ENCODE measurements at regions of chr3 and their contacts with region 1.

Region 1: DNA sequence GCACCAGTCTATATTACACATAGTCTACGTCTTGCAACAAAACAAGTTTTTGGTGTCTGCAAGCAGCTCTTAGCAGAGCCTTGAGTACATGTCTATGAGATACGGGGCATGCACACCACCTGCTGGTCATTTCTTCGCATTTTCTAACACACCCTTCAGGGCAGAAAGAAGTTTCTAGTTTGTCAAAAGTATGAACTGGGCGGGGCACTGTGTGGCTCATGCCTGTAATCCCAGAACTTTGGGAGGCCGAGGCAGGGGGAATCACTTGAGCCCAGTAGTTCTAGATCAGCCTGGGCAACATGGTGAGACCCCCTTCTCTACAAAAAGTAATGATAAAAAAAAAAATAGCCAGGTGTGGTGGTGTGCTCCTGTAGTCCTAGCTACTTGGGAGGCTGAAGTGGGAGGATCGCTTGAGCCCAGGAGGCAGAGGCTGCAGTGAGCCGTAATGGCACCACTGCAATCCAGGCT is 64.2 kb upstream of the ARL8B start:
- DNase-seq: peak; percentile 91
- ATAC-seq: peak; percentile 94
- H3K4me3 Mint-ChIP-seq: no peak overlapping the region
- H3K27ac Mint-ChIP-seq: peak overlapping the region; percentile 20
- H3K4me1 Mint-ChIP-seq: peaks cover 73% of the 10 kb centered on the region
- H3K27me3 Mint-ChIP-seq: peaks cover 9% of the 10 kb centered on the region

Region 2: GRCh38 chr3:4720279-4721075 is 337.4 kb before region 1 on chr3:
- CTCF ChIA-PET with region 1: interaction called, 190 read pairs
- DNase-seq: no peak
- ATAC-seq: peak; percentile 54
- H3K4me3 Mint-ChIP-seq: no peak overlapping the region
- H3K27ac Mint-ChIP-seq: peak overlapping the region; percentile 12
- H3K4me1 Mint-ChIP-seq: peaks cover 53% of the 10 kb centered on the region
- H3K27me3 Mint-ChIP-seq: no peaks in the 10 kb centered on the region

Region 3: GRCh38 chr3:5026331-5027218 is 31.3 kb before region 1 on chr3:
- CTCF ChIA-PET with region 1: interaction called, 11 read pairs
- DNase-seq: peak; percentile 85
- ATAC-seq: peak; percentile 70
- H3K4me3 Mint-ChIP-seq: peak overlapping the region; percentile 74
- H3K27ac Mint-ChIP-seq: peak overlapping the region; percentile 87
- H3K4me1 Mint-ChIP-seq: peaks cover 64% of the 10 kb centered on the region
- H3K27me3 Mint-ChIP-seq: no peaks in the 10 kb centered on the region

Region 4: DNA sequence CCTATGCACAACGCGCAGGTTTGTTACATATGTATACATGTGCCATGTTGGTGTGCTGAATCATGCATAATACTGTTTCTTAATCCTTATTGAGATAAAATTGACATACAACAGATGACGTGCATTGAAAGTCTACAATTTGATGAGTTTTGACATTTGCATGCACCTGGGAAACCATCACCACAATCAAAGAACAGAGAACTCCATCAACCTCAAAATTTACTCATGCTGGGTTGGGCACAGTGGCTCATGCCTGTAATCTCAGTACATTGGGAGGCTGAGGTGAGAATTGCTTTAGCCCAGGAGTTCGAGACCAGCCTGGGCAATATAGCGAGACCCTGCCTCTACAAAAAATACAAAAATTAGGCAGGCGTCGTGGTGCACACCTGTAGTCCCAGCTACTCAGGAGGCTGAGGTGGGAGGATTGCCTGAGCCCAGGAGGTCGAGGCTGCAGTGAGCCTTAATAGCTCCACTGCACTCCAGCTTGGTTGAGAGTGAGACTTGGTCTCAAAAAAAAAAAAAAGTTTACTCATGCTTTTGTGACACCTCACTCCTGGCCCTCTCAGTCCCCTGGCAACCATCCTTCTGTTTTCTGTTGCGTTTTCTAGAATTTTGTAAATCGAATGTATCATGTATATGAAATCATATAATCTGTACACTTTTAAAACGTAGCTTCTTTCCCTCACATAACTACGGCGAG is 22.0 kb before region 1 on chr3:
- CTCF ChIA-PET with region 1: interaction called, 118 read pairs
- DNase-seq: no peak
- ATAC-seq: no peak
- H3K4me3 Mint-ChIP-seq: no peak overlapping the region
- H3K27ac Mint-ChIP-seq: peak overlapping the region; percentile 49
- H3K4me1 Mint-ChIP-seq: peaks cover 65% of the 10 kb centered on the region
- H3K27me3 Mint-ChIP-seq: no peaks in the 10 kb centered on the region